ENCODE measurements at regions of chr6 and their contacts with region 1.

Region 1: DNA sequence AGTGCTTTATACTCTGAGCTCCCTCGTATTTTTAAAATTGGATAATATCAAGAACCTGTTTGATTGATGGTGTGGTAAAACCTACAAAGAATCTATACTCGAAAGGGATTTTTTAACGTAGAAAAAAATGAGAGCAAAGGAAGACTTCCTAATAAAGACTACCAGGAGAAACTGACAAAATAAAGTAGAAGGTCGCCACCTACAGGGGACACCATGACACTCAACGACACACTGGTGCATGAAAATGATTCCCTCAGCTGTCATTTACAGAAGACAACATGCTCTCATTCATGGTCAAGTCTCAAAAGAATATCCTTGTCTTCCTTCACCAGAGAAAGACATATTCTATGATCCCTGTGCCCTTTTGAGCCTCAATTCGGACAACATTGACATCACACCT is 10.1 kb upstream of the NHSL1 start:
- DNase-seq: peak; percentile 30 to 58 (median 52)
- H3K4me3 ChIP-seq: no peak overlapping the region
- H3K4me3 Mint-ChIP-seq: peak overlapping the region in 1 of 2 donors; percentile 33
- H3K27ac ChIP-seq: no peak overlapping the region
- H3K27ac Mint-ChIP-seq: no peak overlapping the region
- H3K4me1 ChIP-seq: peaks cover 4 to 8% of the 10 kb centered on the region in 2 donors
- H3K4me1 Mint-ChIP-seq: peaks cover 13% of the 10 kb centered on the region
- H3K27me3 ChIP-seq: no peaks in the 10 kb centered on the region
- H3K27me3 Mint-ChIP-seq: peaks cover 0 to 3% (median 1%) of the 10 kb centered on the region in 3 donors
- CTCF ChIP-seq: peak; percentile 70

Region 2: GRCh38 chr6:138455746-138456400 is 53.5 kb before region 1 on chr6:
- intact Hi-C with region 1: loop called in 1 of 2 experiments (anchors 10 kb)
- DNase-seq: no peak
- H3K4me3 ChIP-seq: peak overlapping the region in 1 of 3 experiments; percentile 53
- H3K4me3 Mint-ChIP-seq: peak overlapping the region; percentile 31 to 42
- H3K27ac ChIP-seq: no peak overlapping the region
- H3K27ac Mint-ChIP-seq: no peak overlapping the region
- H3K4me1 ChIP-seq: peaks cover 11 to 19% of the 10 kb centered on the region in 2 donors
- H3K4me1 Mint-ChIP-seq: peaks cover 19% of the 10 kb centered on the region
- H3K27me3 ChIP-seq: no peaks in the 10 kb centered on the region
- H3K27me3 Mint-ChIP-seq: no peaks in the 10 kb centered on the region
- CTCF ChIP-seq: no peak